ENCODE measurements at regions of chr19 and their contacts with region 1.

Region 1: DNA sequence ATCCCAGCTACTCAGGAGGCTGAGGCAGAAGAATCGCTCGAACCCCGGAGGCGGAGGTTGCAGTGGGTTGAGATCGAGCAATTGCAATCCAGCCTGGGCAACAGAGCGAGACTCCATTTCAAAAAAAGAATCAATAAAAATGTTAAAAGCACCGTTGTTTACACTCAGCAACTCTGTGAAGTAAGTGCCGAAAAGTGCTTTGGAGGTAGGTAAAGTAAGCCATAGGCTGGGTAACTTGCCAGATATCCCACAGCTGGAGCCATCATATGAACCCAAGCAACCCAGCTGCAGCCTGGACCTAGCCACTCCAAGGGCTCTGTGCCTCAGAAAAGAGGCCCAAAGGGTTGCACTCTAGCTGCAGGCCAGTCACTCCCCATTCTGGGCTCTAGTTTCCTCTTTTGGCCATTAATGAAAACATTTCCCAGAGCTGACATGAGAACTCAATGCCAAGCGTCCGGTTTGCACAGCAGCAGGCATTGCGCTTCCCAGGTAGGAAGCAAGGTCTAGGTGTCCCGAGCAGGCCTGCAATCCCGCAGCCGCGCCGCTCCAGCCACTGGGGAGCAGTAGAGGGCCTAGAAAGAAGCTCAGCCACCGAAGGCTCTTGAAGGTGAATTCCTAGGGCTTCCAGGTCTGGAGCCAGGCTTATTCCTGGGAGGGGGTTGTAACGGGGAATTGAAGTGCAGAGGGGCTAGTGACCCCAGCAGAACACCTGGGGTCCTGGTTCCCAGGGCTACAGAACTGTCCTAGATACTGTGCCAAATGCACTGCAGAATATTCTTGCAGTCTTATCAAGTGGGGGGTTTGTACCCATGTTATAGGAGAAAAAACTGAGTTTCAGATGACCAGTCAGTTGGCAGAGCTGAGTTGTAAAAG is 4.1 kb upstream of the CD79A start:
- DNase-seq: peak; percentile 58 to 72 (median 65)
- ATAC-seq: peak; percentile 20
- H3K4me3 ChIP-seq: no peak overlapping the region
- H3K4me3 Mint-ChIP-seq: peak overlapping the region; percentile 1 to 93 (median 67)
- H3K27ac ChIP-seq: peak overlapping the region; percentile 74
- H3K27ac Mint-ChIP-seq: peak overlapping the region; percentile 91 to 99 (median 99)
- H3K4me1 ChIP-seq: peaks cover 82 to 91% of the 10 kb centered on the region in 2 donors
- H3K4me1 Mint-ChIP-seq: peaks cover 45 to 93% (median 79%) of the 10 kb centered on the region in 7 donors
- H3K27me3 ChIP-seq: no peaks in the 10 kb centered on the region
- H3K27me3 Mint-ChIP-seq: no peaks in the 10 kb centered on the region

Region 2: GRCh38 chr19:41479757-41480191 is 393.2 kb before region 1 on chr19:
- CTCF ChIA-PET with region 1: no interaction called
- POLR2A ChIA-PET with region 1: no interaction called
- intact Hi-C with region 1: no loop called
- DNase-seq: no peak
- ATAC-seq: no peak
- H3K4me3 ChIP-seq: no peak overlapping the region
- H3K4me3 Mint-ChIP-seq: no peak overlapping the region
- H3K27ac ChIP-seq: no peak overlapping the region
- H3K27ac Mint-ChIP-seq: peak overlapping the region in 1 of 9 donors; percentile 80
- H3K4me1 ChIP-seq: no peaks in the 10 kb centered on the region
- H3K4me1 Mint-ChIP-seq: peaks cover 0 to 5% (median 0%) of the 10 kb centered on the region in 7 donors
- H3K27me3 ChIP-seq: no peaks in the 10 kb centered on the region
- H3K27me3 Mint-ChIP-seq: peaks cover 33 to 48% (median 42%) of the 10 kb centered on the region in 5 donors

Region 3: DNA sequence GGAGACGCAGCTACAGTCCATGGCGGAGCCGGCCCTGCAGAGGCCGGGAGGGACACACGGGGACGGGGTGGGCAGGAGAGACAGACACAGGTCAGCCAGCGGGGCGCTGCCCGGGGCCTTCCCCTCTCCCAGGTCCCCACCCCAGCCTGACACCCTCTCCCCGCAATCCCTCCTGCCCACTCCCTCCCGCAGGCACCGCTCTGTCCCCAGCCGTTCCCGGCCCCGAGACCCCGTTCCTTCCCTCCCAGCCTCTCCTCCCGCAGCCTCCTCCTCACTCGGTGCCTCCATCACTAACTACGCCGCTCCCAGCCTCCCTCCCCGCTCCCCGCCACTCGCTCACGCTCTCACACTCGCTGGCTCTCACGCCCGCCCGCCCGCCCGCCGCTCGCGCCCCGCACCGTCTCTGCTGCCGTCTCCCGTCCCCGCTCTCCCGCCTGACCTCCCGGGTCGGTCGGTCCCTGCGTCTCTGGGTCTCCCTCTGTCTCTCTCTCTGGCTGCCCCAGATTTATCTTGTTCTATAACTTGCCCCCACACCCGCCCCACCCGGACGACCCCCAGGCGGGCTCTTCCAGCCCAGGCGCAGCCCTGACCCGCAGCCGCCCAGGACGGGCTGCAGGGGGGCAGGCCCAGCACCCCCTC is 40.0 kb after region 1 on chr19:
- CTCF ChIA-PET with region 1: interaction called, 4 read pairs
- POLR2A ChIA-PET with region 1: interaction called, 6 read pairs
- intact Hi-C with region 1: loop called in 1 of 2 experiments (anchors 2 kb)
- DNase-seq: peak in 3 of 9 donors; percentile 39 to 46 (median 45)
- ATAC-seq: peak; percentile 32
- H3K4me3 ChIP-seq: no peak overlapping the region
- H3K4me3 Mint-ChIP-seq: peak overlapping the region in 6 of 10 donors; percentile 37 to 71 (median 51)
- H3K27ac ChIP-seq: no peak overlapping the region
- H3K27ac Mint-ChIP-seq: peak overlapping the region in 4 of 9 donors; percentile 35 to 87 (median 78)
- H3K4me1 ChIP-seq: peaks cover 20 to 53% of the 10 kb centered on the region in 2 donors
- H3K4me1 Mint-ChIP-seq: peaks cover 15 to 43% (median 31%) of the 10 kb centered on the region in 7 donors
- H3K27me3 ChIP-seq: peaks cover 0 to 23% of the 10 kb centered on the region in 2 donors
- H3K27me3 Mint-ChIP-seq: peaks cover 0 to 28% (median 0%) of the 10 kb centered on the region in 5 donors

Region 4: GRCh38 chr19:41934849-41935374 is 61.9 kb after region 1 on chr19:
- CTCF ChIA-PET with region 1: interaction called, 13 read pairs
- POLR2A ChIA-PET with region 1: interaction called, 43 read pairs
- intact Hi-C with region 1: loop called (anchors 1 kb)
- DNase-seq: peak; percentile 47 to 78 (median 67)
- ATAC-seq: peak; percentile 83
- H3K4me3 ChIP-seq: no peak overlapping the region
- H3K4me3 Mint-ChIP-seq: peak overlapping the region in 4 of 10 donors; percentile 30 to 66 (median 33)
- H3K27ac ChIP-seq: peak overlapping the region; percentile 40
- H3K27ac Mint-ChIP-seq: peak overlapping the region; percentile 46 to 88 (median 81)
- H3K4me1 ChIP-seq: peaks cover 26 to 29% of the 10 kb centered on the region in 2 donors
- H3K4me1 Mint-ChIP-seq: peaks cover 37 to 63% (median 48%) of the 10 kb centered on the region in 7 donors
- H3K27me3 ChIP-seq: peaks cover 0 to 4% of the 10 kb centered on the region in 2 donors
- H3K27me3 Mint-ChIP-seq: peaks cover 0 to 24% (median 0%) of the 10 kb centered on the region in 5 donors

Region 5: GRCh38 chr19:41951686-41952172 is 78.7 kb after region 1 on chr19:
- CTCF ChIA-PET with region 1: interaction called, 41 read pairs
- POLR2A ChIA-PET with region 1: interaction called, 42 read pairs
- intact Hi-C with region 1: loop called (anchors 1 kb)
- DNase-seq: peak; percentile 63 to 93 (median 78)
- ATAC-seq: peak; percentile 95
- H3K4me3 ChIP-seq: no peak overlapping the region
- H3K4me3 Mint-ChIP-seq: peak overlapping the region in 2 of 10 donors; percentile 54 to 67
- H3K27ac ChIP-seq: peak overlapping the region; percentile 15
- H3K27ac Mint-ChIP-seq: peak overlapping the region in 8 of 9 donors; percentile 48 to 89 (median 63)
- H3K4me1 ChIP-seq: peaks cover 0 to 15% of the 10 kb centered on the region in 2 donors
- H3K4me1 Mint-ChIP-seq: peaks cover 11 to 19% (median 12%) of the 10 kb centered on the region in 7 donors
- H3K27me3 ChIP-seq: no peaks in the 10 kb centered on the region
- H3K27me3 Mint-ChIP-seq: no peaks in the 10 kb centered on the region

Region 6: DNA sequence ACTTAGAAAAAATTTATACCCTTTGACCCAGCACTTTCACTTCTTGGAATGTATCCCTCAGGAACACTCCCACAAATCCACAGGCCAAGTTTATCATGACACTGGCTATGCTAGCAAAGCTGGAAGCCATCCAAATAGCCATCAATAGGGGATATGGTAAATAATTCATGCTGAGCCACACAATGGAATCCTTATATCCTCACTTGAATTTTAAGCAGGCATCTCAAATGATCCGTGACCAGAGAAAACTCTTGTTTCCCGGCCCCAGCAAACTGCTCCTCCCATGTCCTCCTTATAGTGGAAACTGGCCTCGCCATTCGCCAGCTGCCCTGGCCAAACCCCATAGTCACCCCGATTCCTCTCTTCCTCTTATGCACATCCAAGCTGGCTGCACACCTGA is 159.4 kb after region 1 on chr19:
- CTCF ChIA-PET with region 1: no interaction called
- POLR2A ChIA-PET with region 1: no interaction called
- intact Hi-C with region 1: loop called in 1 of 2 experiments (anchors 5 kb)
- DNase-seq: no peak
- ATAC-seq: no peak
- H3K4me3 ChIP-seq: no peak overlapping the region
- H3K4me3 Mint-ChIP-seq: no peak overlapping the region
- H3K27ac ChIP-seq: no peak overlapping the region
- H3K27ac Mint-ChIP-seq: peak overlapping the region in 1 of 9 donors; percentile 88
- H3K4me1 ChIP-seq: no peaks in the 10 kb centered on the region
- H3K4me1 Mint-ChIP-seq: peaks cover 0 to 8% (median 0%) of the 10 kb centered on the region in 7 donors
- H3K27me3 ChIP-seq: no peaks in the 10 kb centered on the region
- H3K27me3 Mint-ChIP-seq: peaks cover 0 to 11% (median 6%) of the 10 kb centered on the region in 5 donors

Region 7: GRCh38 chr19:42143341-42144234 is 270.6 kb after region 1 on chr19:
- CTCF ChIA-PET with region 1: no interaction called
- POLR2A ChIA-PET with region 1: no interaction called
- intact Hi-C with region 1: no loop called
- DNase-seq: no peak
- ATAC-seq: no peak
- H3K4me3 ChIP-seq: no peak overlapping the region
- H3K4me3 Mint-ChIP-seq: no peak overlapping the region
- H3K27ac ChIP-seq: no peak overlapping the region
- H3K27ac Mint-ChIP-seq: peak overlapping the region in 1 of 9 donors; percentile 70
- H3K4me1 ChIP-seq: peaks cover under 1 to 8% of the 10 kb centered on the region in 2 donors
- H3K4me1 Mint-ChIP-seq: peaks cover 9 to 21% (median 13%) of the 10 kb centered on the region in 7 donors
- H3K27me3 ChIP-seq: no peaks in the 10 kb centered on the region
- H3K27me3 Mint-ChIP-seq: peaks cover 0 to 24% (median 3%) of the 10 kb centered on the region in 5 donors